ENCODE measurements at regions of chr11 and their contacts with region 1.

Region 1: GRCh38 chr11:69059985-69060384 is 11.3 kb downstream of the TPCN2 start:
- DNase-seq: no peak
- ATAC-seq: no peak
- H3K4me3 Mint-ChIP-seq: no peak overlapping the region
- H3K27ac Mint-ChIP-seq: peak overlapping the region; percentile 29; the same call in 1 of the 2 replicates
- H3K4me1 Mint-ChIP-seq: no peaks in the 10 kb centered on the region
- H3K27me3 Mint-ChIP-seq: no peaks in the 10 kb centered on the region
- CTCF ChIP-seq: no peak

Region 2: DNA sequence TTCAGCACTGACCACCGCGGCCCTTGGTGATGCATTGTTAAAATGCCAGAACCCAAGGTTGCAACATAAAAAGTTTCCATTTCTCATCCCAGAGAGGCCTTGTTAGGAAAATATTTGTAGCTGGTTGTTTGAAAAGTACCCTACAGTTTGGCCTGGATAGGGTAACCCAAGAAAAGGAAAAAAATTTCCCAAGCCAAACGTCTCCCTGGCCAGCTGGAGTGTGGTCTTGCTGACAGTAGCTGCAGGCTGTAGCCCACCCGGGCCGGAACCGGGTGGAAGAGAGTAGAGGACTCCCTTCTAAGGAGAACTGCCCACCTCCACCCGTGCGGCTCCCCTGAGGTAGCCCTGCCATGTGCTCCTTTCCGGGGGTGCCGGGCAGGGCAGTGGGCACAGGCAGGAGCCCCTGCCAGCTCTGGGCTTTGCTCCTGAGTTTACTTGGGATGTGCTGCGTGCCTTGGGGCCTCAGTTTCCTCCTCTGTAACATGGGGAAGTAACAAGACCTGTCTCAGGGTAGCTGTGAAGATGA is 117.8 kb before region 1 on chr11:
- CTCF ChIA-PET with region 1: no interaction called
- POLR2A ChIA-PET with region 1: no interaction called
- DNase-seq: no peak
- ATAC-seq: no peak
- H3K4me3 Mint-ChIP-seq: no peak overlapping the region
- H3K27ac Mint-ChIP-seq: no peak overlapping the region
- H3K4me1 Mint-ChIP-seq: 0 out of 2 replicates have a peak, but pooled peaks cover 4% of the 10 kb centered on the region
- H3K27me3 Mint-ChIP-seq: no peaks in the 10 kb centered on the region
- CTCF ChIP-seq: no peak

Region 3: GRCh38 chr11:68965901-68966853 is 93.8 kb before region 1 on chr11:
- CTCF ChIA-PET with region 1: no interaction called
- POLR2A ChIA-PET with region 1: interaction called, 10 read pairs
- DNase-seq: no peak
- ATAC-seq: no peak
- H3K4me3 Mint-ChIP-seq: no peak overlapping the region
- H3K27ac Mint-ChIP-seq: no peak overlapping the region
- H3K4me1 Mint-ChIP-seq: peaks cover 6% of the 10 kb centered on the region
- H3K27me3 Mint-ChIP-seq: no peaks in the 10 kb centered on the region
- CTCF ChIP-seq: no peak

Region 4: DNA sequence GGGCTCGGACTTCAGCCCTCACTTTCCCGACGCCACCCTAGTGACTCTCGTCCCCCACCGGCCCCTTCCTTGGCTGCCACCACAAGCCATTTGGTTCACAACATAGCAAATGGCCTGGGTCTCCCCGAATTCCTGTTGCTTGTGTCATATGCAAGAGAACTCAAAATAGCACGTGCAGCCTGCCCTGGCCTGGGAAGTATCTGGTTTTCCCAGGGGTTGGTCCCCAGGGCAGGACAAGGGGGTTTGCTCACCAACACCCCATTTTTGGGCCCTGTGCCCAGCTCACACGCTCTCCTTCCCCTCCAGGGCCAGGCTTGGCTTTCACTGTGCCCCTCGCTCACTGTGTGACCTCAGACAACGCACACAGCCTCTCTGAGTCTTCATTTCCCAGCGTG is 24.0 kb before region 1 on chr11:
- CTCF ChIA-PET with region 1: no interaction called
- POLR2A ChIA-PET with region 1: no interaction called
- DNase-seq: no peak
- ATAC-seq: no peak
- H3K4me3 Mint-ChIP-seq: no peak overlapping the region
- H3K27ac Mint-ChIP-seq: no peak overlapping the region; the same call in 1 of the 2 replicates
- H3K4me1 Mint-ChIP-seq: peaks cover 12% of the 10 kb centered on the region
- H3K27me3 Mint-ChIP-seq: no peaks in the 10 kb centered on the region
- CTCF ChIP-seq: no peak

Region 5: DNA sequence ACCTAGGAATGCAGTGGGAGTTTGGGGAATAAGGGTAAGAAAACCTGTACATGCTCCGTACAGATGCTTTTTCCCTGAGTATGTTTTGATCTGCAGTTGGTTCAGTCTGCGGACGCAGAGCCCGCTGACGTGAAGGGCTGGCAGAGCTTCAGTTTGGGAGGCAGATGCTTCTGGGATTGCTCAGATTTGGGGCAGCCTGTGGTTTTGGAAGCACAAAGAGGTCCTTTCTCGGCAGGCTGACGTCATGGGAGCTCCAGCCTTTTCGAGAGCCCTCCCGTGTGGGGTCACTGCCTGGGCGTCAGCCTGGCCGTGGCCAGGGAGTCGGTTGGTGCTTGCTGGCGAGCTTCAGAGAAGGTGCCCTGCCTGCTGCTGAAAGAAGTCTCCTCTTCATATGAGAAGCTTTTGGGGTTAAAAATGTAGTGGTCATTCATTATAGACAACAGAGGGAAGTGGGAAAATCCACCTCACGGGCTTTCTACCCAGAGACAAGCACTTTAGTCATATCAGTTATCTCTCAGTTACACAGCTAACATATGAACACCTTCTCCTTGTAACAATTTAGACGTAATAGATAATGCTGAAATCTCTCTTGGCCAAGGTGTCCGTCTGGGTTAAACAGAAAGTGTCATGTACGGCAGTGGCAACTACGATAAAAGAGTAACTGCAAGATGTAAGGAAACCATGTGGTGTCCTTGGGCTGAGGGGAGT is 15.6 kb after region 1 on chr11:
- CTCF ChIA-PET with region 1: no interaction called
- POLR2A ChIA-PET with region 1: no interaction called
- DNase-seq: no peak
- ATAC-seq: no peak
- H3K4me3 Mint-ChIP-seq: no peak overlapping the region
- H3K27ac Mint-ChIP-seq: peak overlapping the region; percentile 58
- H3K4me1 Mint-ChIP-seq: peaks cover 3% of the 10 kb centered on the region; the same call in 1 of the 2 replicates
- H3K27me3 Mint-ChIP-seq: no peaks in the 10 kb centered on the region
- CTCF ChIP-seq: no peak

Region 6: GRCh38 chr11:69138265-69138664 is 78.3 kb after region 1 on chr11:
- CTCF ChIA-PET with region 1: no interaction called
- POLR2A ChIA-PET with region 1: no interaction called
- DNase-seq: no peak
- ATAC-seq: no peak
- H3K4me3 Mint-ChIP-seq: no peak overlapping the region
- H3K27ac Mint-ChIP-seq: no peak overlapping the region
- H3K4me1 Mint-ChIP-seq: no peaks in the 10 kb centered on the region
- H3K27me3 Mint-ChIP-seq: peaks cover 3% of the 10 kb centered on the region; the same call in 1 of the 2 replicates
- CTCF ChIP-seq: no peak

Measured in WTC11 (cell line).